Sigmoid colon (tissue), 7 donors: ENCODE measurements at regions of chr1 and their contacts with region 1.

Region 1: GRCh38 chr1:27574871-27575831 is 28.8 kb downstream of the AHDC1 start:
- DNase-seq: peak; percentile 93
- H3K4me3 ChIP-seq: peak overlapping the region; percentile 30 to 60 (median 56)
- H3K27ac ChIP-seq: peak overlapping the region; percentile 96 to 98 (median 97)
- H3K4me1 ChIP-seq: peaks cover 0 to 89% (median 78%) of the 10 kb centered on the region in 4 donors
- H3K27me3 ChIP-seq: no peaks in the 10 kb centered on the region
- CTCF ChIP-seq: peak in 1 of 4 experiments; percentile 9
- EP300 ChIP-seq: peak in 2 of 4 donors; percentile 10 to 46
- POLR2A ChIP-seq: peak in 1 of 2 donors; percentile 31

Region 2: GRCh38 chr1:27525296-27526272 is 49.6 kb before region 1 on chr1:
- intact Hi-C with region 1: loop called (anchors 5 kb)
- DNase-seq: peak; percentile 93
- H3K4me3 ChIP-seq: peak overlapping the region; percentile 11 to 52 (median 23)
- H3K27ac ChIP-seq: peak overlapping the region; percentile 90 to 96 (median 94)
- H3K4me1 ChIP-seq: peaks cover 0 to 93% (median 91%) of the 10 kb centered on the region in 4 donors
- H3K27me3 ChIP-seq: no peaks in the 10 kb centered on the region
- CTCF ChIP-seq: no peak
- EP300 ChIP-seq: peak in 1 of 4 donors; percentile 7
- POLR2A ChIP-seq: no peak

Region 3: DNA sequence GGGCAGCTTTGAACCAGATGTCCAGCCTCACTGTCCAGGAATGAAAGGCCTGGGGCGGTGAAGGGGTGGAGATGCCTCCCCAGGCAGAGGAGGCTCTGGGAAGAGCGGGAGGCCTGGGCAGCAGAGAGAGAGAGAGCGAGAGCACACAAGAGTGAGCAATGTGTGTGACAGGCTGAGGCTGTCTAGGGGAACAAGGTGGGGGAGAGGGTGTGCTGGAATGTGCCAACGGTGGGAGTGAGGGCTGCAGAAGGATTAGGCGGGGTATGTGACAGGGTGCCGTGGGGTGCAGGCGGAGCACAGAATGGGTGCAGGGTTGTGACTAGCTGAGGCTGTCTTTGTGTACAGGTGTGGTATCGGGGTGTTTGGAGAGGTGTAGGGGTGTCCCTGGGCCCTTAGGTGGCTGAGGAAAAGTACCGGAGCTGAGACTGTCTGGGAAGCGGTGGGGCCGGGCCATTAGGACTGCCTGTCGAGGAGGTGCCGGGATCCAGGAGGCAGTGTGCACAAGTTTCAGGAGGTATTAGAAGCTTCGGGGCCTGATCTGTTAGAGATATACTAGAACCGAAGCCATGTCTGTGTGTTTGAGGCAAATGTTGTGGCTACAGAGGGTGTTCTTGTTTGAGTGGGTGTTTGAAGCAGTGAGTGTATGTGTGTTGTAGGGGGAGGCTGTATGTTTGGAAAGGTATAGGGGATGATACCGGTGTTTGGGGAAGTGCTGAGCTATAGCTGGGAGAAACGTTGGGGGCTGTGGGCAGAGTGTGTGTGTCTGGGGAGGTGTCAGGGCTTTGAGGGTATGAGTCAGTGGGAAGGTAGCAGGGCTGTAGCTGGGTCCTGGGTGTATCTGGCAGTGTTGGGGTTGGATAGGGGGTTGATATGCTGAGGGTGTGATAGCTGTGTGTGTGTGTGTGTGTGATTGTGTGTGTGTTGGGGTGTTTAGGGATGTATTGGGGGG is 19.7 kb after region 1 on chr1:
- intact Hi-C with region 1: loop called (anchors 2 kb)
- DNase-seq: no peak
- H3K4me3 ChIP-seq: no peak overlapping the region
- H3K27ac ChIP-seq: peak overlapping the region; percentile 65 to 100 (median 96)
- H3K4me1 ChIP-seq: peaks cover 0 to 100% (median 100%) of the 10 kb centered on the region in 4 donors
- H3K27me3 ChIP-seq: no peaks in the 10 kb centered on the region
- CTCF ChIP-seq: no peak
- EP300 ChIP-seq: no peak
- POLR2A ChIP-seq: no peak

Region 4: GRCh38 chr1:27959400-27960217 is 384.5 kb after region 1 on chr1 and contains the start of gene XKR8:
- intact Hi-C with region 1: no loop called
- DNase-seq: peak; percentile 91
- H3K4me3 ChIP-seq: peak within 1 kb of the TSS; percentile 43 to 87 (median 68)
- H3K27ac ChIP-seq: peak within 1 kb of the TSS; percentile 83 to 94 (median 92)
- H3K4me1 ChIP-seq: peaks cover 0 to 30% (median 22%) of the 10 kb centered on the region in 4 donors
- H3K27me3 ChIP-seq: no peaks in the 10 kb centered on the region
- CTCF ChIP-seq: peak in 1 of 4 experiments; percentile 22
- EP300 ChIP-seq: no peak
- POLR2A ChIP-seq: peak in 1 of 2 donors; percentile 32
- total RNA-seq, gene XKR8: 5.2 to 6.9 (median 5.4) TPM